Posterior cingulate gyrus (tissue), 11 donors: ENCODE measurements at regions of chr2 and their contacts with region 1.

Region 1: GRCh38 chr2:105114551-105114950 is 76.7 kb downstream of the MRPS9 start:
- DNase-seq: no peak

Region 2: DNA sequence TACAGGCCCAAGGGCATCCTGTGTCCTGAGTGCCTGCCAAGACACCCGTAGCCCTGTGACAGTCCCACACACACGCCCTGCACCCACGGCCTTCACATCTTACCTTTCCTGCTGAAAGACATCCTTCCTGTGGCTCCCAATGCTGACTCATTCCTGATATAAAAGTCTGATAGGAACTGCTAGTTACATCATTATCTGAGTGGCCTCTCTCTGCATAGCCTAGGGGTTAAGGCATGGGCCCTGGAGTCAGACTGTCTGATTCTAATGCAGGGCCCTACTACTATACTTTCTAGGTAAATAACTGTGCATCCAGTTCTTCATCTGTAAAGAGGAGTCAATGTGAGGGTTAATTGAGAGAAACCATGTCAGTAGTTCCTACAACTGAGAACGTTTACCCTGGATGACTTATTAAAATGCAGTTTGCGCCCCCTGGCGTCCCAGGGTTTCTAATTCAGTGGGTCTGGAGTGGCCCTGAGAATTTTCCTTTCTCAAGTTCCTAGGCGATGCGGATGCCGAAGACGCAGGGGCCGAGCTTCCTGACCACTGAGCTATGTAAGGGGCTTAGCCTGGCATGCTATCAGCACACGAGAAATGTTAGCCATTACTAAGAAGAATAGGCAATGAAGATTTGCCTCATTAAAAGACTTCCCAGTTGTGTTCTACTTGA is 121.0 kb after region 1 on chr2:
- intact Hi-C with region 1: loop called (anchors 1 kb)
- DNase-seq: peak in 9 of 10 donors; percentile 45 to 95 (median 74)

Region 3: GRCh38 chr2:105294844-105295481 is 180.4 kb after region 1 on chr2:
- intact Hi-C with region 1: loop called (anchors 2 kb)
- DNase-seq: peak; percentile 28 to 94 (median 70)